Mammary epithelial cell (primary cell): ENCODE measurements at regions of chr7 and their contacts with region 1.

Region 1: GRCh38 chr7:96596120-96596826 is 113.4 kb downstream of the SEM1 start:
- DNase-seq: peak; percentile 23
- H3K4me3 ChIP-seq: no peak overlapping the region
- H3K27ac ChIP-seq: no peak overlapping the region
- H3K4me1 ChIP-seq: no peaks in the 10 kb centered on the region
- H3K27me3 ChIP-seq: peaks cover 3% of the 10 kb centered on the region
- CTCF ChIP-seq: peak; percentile 13 to 61

Region 2: DNA sequence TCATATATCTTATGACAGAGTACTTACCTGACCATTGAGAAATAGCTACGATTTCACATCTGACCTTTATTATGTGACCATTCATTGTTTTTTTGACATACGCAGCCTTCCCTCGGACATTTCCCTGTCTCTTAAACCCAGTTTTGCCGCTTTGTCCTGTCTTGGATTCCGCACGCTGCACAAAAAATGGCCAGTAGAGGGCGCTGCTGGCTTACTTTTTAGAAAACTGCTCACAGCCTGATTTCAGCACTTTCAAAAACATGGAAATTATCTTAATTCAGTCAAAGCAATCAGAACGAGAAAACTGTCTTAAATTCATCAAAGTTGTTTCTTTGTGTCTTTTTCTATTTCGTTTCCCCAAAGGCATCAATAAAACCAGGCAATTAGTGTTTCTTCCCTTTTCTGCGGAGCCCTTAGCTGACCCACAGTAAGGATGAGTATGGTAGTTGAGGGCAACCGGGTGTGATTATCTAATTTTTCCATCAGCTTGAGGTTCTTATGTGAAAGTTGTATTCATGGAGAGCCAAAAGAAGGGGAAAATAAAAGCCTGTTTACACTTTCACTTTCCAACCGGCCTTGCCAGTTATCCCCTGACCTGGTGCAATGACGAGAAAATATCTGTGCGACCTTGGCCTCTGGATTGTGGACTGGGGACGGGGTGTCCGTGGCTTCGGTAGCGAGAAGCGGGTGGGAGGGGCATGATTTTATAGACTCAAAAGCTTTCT is 679.5 kb before region 1 on chr7:
- CTCF ChIA-PET with region 1: no interaction called
- dilution Hi-C with region 1: no loop called
- in situ Hi-C with region 1: no loop called
- intact Hi-C with region 1: loop called (anchors 10 kb)
- DNase-seq: peak; percentile 35
- H3K4me3 ChIP-seq: no peak overlapping the region
- H3K27ac ChIP-seq: no peak overlapping the region
- H3K4me1 ChIP-seq: no peaks in the 10 kb centered on the region
- H3K27me3 ChIP-seq: no peaks in the 10 kb centered on the region
- CTCF ChIP-seq: peak; percentile 85 to 92

Region 3: DNA sequence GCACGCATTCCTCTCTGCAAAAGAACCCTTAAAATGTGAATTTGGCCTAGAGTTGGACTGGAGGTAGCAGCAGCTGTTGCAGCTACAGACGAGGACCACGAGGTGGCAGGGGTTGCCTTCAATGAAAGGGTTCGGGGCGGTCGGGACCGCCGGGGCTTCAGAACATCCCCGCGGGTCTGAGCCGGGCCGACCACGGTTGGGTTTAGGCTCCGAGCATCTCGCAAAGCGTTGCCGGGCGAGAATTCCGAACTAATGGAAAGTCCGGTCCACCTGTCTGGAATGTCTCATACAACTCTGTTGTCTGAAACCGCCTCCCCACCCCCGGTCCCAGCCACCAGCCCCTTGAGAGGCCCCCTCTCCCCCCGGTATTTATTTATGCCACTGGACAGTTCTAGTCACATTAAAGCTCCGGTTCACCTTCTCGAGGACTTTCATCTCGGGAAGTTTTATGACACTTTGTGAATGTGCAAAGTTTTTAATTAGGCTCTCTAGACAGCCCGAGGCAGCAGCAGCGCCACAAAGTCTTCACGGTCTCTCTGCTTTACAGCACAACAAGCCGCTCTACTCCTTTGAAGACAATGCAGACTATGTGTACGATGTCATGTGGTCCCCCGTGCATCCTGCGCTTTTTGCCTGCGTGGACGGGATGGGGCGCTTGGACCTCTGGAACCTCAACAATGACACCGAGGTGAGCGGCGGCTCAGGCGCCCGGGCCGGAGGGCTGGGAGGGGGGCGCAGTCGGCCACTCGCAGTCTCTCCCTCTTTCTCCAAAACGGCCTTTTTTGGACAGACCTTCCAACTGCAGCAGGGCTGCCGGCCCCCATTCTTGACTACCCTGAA is 520.5 kb before region 1 on chr7:
- CTCF ChIA-PET with region 1: no interaction called
- dilution Hi-C with region 1: no loop called
- in situ Hi-C with region 1: no loop called
- intact Hi-C with region 1: loop called (anchors 5 kb)
- DNase-seq: peak; percentile 26
- H3K4me3 ChIP-seq: peak overlapping the region; percentile 50 to 74 (median 61)
- H3K27ac ChIP-seq: no peak overlapping the region
- H3K4me1 ChIP-seq: peaks cover 12% of the 10 kb centered on the region
- H3K27me3 ChIP-seq: no peaks in the 10 kb centered on the region
- CTCF ChIP-seq: peak; percentile 79 to 91

Region 4: DNA sequence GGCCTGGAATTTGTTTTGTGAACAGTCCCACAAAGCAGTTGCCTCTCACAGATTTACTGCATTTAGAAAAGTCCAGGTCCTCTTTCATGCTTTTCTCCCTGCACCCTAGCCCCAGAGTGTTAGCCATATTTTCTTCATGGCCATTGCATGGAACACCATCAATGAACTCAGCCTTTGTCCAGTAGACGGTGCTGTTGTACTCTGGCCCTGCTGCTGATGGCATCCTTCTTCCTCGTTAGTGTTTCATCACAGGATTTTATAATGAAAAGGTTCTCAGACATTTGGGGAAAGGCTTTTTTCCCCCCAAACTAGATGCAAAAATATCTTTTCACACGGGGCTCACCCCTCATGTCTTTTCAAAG is 181.4 kb before region 1 on chr7:
- CTCF ChIA-PET with region 1: no interaction called
- dilution Hi-C with region 1: no loop called
- in situ Hi-C with region 1: no loop called
- intact Hi-C with region 1: loop called (anchors 10 kb)
- DNase-seq: peak; percentile 18
- H3K4me3 ChIP-seq: no peak overlapping the region
- H3K27ac ChIP-seq: no peak overlapping the region
- H3K4me1 ChIP-seq: no peaks in the 10 kb centered on the region
- H3K27me3 ChIP-seq: no peaks in the 10 kb centered on the region
- CTCF ChIP-seq: peak; percentile 92 to 99

Region 5: DNA sequence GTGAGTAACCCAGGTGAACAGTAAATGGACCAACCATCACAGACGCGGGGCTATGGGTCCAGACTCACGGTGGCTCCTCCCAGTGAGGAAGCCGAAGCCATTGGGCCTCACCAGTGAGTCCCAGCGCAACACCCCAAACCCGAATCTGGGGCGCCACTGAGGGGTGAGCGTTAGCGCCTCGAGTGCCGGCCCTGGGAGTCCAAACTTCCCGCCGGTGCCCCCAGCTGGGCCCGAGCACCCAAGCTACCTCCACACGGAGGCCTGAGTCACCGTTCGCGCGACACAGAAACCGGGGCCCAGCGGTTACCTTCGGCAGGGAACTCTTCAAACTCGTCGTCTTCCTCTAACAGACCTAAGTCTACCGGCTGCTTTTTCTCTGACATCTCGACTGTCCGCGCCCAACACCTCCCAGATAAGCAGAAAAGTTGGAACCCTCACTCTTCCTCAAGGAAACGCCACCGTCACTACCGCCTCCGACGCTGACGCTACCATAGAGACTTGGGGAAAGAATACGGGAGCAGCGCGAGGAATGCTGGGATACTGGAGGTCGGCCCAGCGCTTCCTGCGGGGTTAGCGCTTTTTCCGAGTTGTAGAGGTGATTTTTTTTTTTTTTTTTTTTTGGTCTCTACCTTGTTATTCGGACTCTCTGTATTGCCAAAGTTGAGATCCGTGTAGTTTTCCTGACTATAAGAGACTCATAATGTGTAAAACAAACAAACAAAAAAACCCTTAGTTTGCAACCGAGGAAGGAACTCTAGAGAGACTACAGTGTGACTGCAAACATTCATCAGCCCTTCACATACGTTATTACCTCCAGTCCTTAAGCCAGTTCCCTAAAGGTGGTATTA is 113.3 kb after region 1 on chr7 and contains the start of gene SEM1:
- CTCF ChIA-PET with region 1: no interaction called
- dilution Hi-C with region 1: no loop called
- in situ Hi-C with region 1: no loop called
- intact Hi-C with region 1: loop called (anchors 5 kb)
- DNase-seq: peak; percentile 81
- H3K4me3 ChIP-seq: peak within 1 kb of the TSS; percentile 68 to 82 (median 79)
- H3K27ac ChIP-seq: peak within 1 kb of the TSS; percentile 96
- H3K4me1 ChIP-seq: peaks cover 15% of the 10 kb centered on the region
- H3K27me3 ChIP-seq: no peaks in the 10 kb centered on the region
- CTCF ChIP-seq: peak in 1 of 2 donors; percentile 8
- total RNA-seq, gene SEM1: 14.7 to 63.5 TPM

Region 6: DNA sequence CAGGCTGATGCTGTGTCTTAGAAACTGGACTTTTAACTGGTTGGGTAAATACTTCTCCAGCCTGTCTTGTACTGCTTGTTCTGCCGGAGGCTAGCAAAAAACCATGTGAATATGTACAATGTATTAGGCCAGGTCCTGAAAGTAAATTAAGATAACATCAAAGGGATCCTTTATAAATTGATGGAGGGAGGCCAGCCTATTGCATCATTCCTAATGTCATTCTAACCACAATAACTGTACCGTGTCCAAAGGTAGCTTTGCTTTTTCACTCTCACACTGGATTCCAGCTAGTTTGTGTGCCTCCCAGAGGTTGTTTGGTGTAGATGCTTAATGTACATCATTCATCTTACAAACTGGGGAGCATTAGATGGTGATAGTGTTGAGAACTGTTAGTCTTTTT is 204.6 kb after region 1 on chr7:
- CTCF ChIA-PET with region 1: interaction called, 4 read pairs
- dilution Hi-C with region 1: no loop called
- in situ Hi-C with region 1: no loop called
- intact Hi-C with region 1: loop called (anchors 1 kb)
- DNase-seq: peak; percentile 62
- H3K4me3 ChIP-seq: no peak overlapping the region
- H3K27ac ChIP-seq: no peak overlapping the region
- H3K4me1 ChIP-seq: no peaks in the 10 kb centered on the region
- H3K27me3 ChIP-seq: no peaks in the 10 kb centered on the region
- CTCF ChIP-seq: peak; percentile 3 to 51

Region 7: DNA sequence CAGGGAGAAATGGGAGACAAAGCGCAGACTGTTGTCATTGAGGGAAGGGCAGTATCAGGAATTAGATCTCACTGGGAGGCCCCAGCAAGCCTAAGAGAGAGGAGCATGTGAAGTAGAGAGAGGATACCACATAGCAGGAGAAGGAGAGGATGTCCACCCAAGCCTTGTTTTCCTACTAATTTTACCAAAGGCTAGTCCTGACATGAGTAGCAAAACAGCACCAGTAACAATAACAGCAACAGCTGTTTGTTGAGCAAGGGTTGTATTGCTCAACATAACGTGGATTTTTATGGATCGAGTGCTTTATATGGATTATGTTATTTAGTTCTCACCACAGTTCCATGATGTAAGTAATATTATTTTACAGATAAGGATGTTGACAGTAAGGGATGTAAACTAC is 273.9 kb after region 1 on chr7:
- CTCF ChIA-PET with region 1: interaction called, 3 read pairs
- dilution Hi-C with region 1: no loop called
- in situ Hi-C with region 1: no loop called
- intact Hi-C with region 1: loop called (anchors 5 kb)
- DNase-seq: peak; percentile 68
- H3K4me3 ChIP-seq: no peak overlapping the region
- H3K27ac ChIP-seq: peak overlapping the region; percentile 42
- H3K4me1 ChIP-seq: peaks cover 19% of the 10 kb centered on the region
- H3K27me3 ChIP-seq: no peaks in the 10 kb centered on the region
- CTCF ChIP-seq: no peak